T-cell (primary cell): ENCODE measurements at regions of chr14 and their contacts with region 1.

Region 1: GRCh38 chr14:58297762-58298476 is 436 bp upstream of the ARID4A start:
- DNase-seq: peak; percentile 92 to 100 (median 99)
- ATAC-seq: peak; percentile 84 to 86 (median 86)
- H3K4me3 ChIP-seq: peak overlapping the region; percentile 87 to 98
- H3K4me3 Mint-ChIP-seq: no peak overlapping the region
- H3K27ac ChIP-seq: peak overlapping the region; percentile 99
- H3K27ac Mint-ChIP-seq: no peak overlapping the region
- H3K4me1 ChIP-seq: peaks cover 29 to 34% of the 10 kb centered on the region in 2 experiments
- H3K4me1 Mint-ChIP-seq: peaks cover 46 to 64% (median 63%) of the 10 kb centered on the region in 3 donors
- H3K27me3 ChIP-seq: no peaks in the 10 kb centered on the region
- H3K27me3 Mint-ChIP-seq: no peaks in the 10 kb centered on the region

Region 2: GRCh38 chr14:58244556-58245387 is 53.1 kb before region 1 on chr14 and contains the start of gene PSMA3:
- CTCF ChIA-PET with region 1: interaction called in 1 of 2 experiments, 13 read pairs
- POLR2A ChIA-PET with region 1: interaction called, 3 to 31 read pairs
- DNase-seq: peak; percentile 93 to 99 (median 98)
- ATAC-seq: peak; percentile 92 to 95 (median 92)
- H3K4me3 ChIP-seq: peak within 1 kb of the TSS; percentile 83 to 88
- H3K4me3 Mint-ChIP-seq: peak within 1 kb of the TSS; percentile 98 to 99 (median 99)
- H3K27ac ChIP-seq: peak within 1 kb of the TSS; percentile 94
- H3K27ac Mint-ChIP-seq: peak within 1 kb of the TSS; percentile 99
- H3K4me1 ChIP-seq: peaks cover 18% of the 10 kb centered on the region in 2 experiments
- H3K4me1 Mint-ChIP-seq: peaks cover 45 to 51% (median 49%) of the 10 kb centered on the region in 3 donors
- H3K27me3 ChIP-seq: no peaks in the 10 kb centered on the region
- H3K27me3 Mint-ChIP-seq: no peaks in the 10 kb centered on the region
- total RNA-seq, gene PSMA3: 75.5 to 139 (median 99.7) TPM

Region 3: DNA sequence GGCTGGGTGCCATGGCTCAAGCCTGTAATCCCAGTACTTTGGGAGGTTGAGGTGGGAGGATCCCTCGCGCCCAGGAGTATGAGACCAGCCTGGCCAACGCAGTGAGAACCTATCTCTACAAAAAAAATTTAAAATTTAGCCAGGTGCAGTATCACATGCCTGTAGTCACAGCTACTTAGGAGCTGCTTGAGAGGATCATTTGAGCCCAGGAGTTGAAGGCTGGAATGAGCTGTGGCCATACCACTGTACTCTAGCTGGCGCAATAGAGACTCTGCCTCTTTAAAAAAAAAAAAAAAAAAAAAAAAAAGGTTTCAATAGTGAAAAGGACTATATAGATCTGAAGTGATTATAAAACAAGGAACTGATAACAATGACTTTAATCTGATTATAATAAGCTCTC is 39.8 kb before region 1 on chr14:
- CTCF ChIA-PET with region 1: interaction called in 1 of 2 experiments, 4 read pairs
- POLR2A ChIA-PET with region 1: interaction called in 1 of 2 experiments, 12 read pairs
- DNase-seq: no peak
- ATAC-seq: no peak
- H3K4me3 ChIP-seq: no peak overlapping the region
- H3K4me3 Mint-ChIP-seq: no peak overlapping the region
- H3K27ac ChIP-seq: no peak overlapping the region
- H3K27ac Mint-ChIP-seq: no peak overlapping the region
- H3K4me1 ChIP-seq: no peaks in the 10 kb centered on the region
- H3K4me1 Mint-ChIP-seq: peaks cover 5 to 18% (median 16%) of the 10 kb centered on the region in 3 donors
- H3K27me3 ChIP-seq: no peaks in the 10 kb centered on the region
- H3K27me3 Mint-ChIP-seq: no peaks in the 10 kb centered on the region

Region 4: GRCh38 chr14:58275527-58276190 is 22.3 kb before region 1 on chr14:
- CTCF ChIA-PET with region 1: no interaction called
- POLR2A ChIA-PET with region 1: interaction called, 3 to 13 read pairs
- DNase-seq: no peak
- ATAC-seq: peak in 1 of 4 experiments; percentile 55
- H3K4me3 ChIP-seq: no peak overlapping the region
- H3K4me3 Mint-ChIP-seq: peak overlapping the region in 1 of 3 donors; percentile 19
- H3K27ac ChIP-seq: peak overlapping the region; percentile 43
- H3K27ac Mint-ChIP-seq: peak overlapping the region; percentile 77 to 91
- H3K4me1 ChIP-seq: peaks cover 16 to 28% of the 10 kb centered on the region in 2 experiments
- H3K4me1 Mint-ChIP-seq: peaks cover 50 to 58% (median 50%) of the 10 kb centered on the region in 3 donors
- H3K27me3 ChIP-seq: no peaks in the 10 kb centered on the region
- H3K27me3 Mint-ChIP-seq: no peaks in the 10 kb centered on the region

Region 5: GRCh38 chr14:58280954-58281787 is 16.7 kb before region 1 on chr14:
- CTCF ChIA-PET with region 1: interaction called in 1 of 2 experiments, 8 read pairs
- POLR2A ChIA-PET with region 1: interaction called, 7 to 14 read pairs
- DNase-seq: peak in 18 of 35 experiments; percentile 9 to 55 (median 18)
- ATAC-seq: peak; percentile 75 to 84 (median 82)
- H3K4me3 ChIP-seq: no peak overlapping the region
- H3K4me3 Mint-ChIP-seq: peak overlapping the region; percentile 49 to 63 (median 55)
- H3K27ac ChIP-seq: peak overlapping the region; percentile 61
- H3K27ac Mint-ChIP-seq: peak overlapping the region; percentile 89 to 90
- H3K4me1 ChIP-seq: peaks cover 24 to 29% of the 10 kb centered on the region in 2 experiments
- H3K4me1 Mint-ChIP-seq: peaks cover 68 to 78% (median 73%) of the 10 kb centered on the region in 3 donors
- H3K27me3 ChIP-seq: no peaks in the 10 kb centered on the region
- H3K27me3 Mint-ChIP-seq: no peaks in the 10 kb centered on the region

Region 6: GRCh38 chr14:58331111-58331510 is 33.2 kb after region 1 on chr14:
- CTCF ChIA-PET with region 1: interaction called, 4 to 5 read pairs
- POLR2A ChIA-PET with region 1: interaction called, 3 to 32 read pairs
- DNase-seq: peak; percentile 69 to 99 (median 90)
- ATAC-seq: peak; percentile 95 to 97 (median 96)
- H3K4me3 ChIP-seq: no peak overlapping the region
- H3K4me3 Mint-ChIP-seq: peak overlapping the region; percentile 41 to 69 (median 52)
- H3K27ac ChIP-seq: peak overlapping the region; percentile 76
- H3K27ac Mint-ChIP-seq: peak overlapping the region; percentile 89 to 93
- H3K4me1 ChIP-seq: peaks cover 2 to 11% of the 10 kb centered on the region in 2 experiments
- H3K4me1 Mint-ChIP-seq: peaks cover 11 to 35% (median 27%) of the 10 kb centered on the region in 3 donors
- H3K27me3 ChIP-seq: no peaks in the 10 kb centered on the region
- H3K27me3 Mint-ChIP-seq: no peaks in the 10 kb centered on the region

Region 7: DNA sequence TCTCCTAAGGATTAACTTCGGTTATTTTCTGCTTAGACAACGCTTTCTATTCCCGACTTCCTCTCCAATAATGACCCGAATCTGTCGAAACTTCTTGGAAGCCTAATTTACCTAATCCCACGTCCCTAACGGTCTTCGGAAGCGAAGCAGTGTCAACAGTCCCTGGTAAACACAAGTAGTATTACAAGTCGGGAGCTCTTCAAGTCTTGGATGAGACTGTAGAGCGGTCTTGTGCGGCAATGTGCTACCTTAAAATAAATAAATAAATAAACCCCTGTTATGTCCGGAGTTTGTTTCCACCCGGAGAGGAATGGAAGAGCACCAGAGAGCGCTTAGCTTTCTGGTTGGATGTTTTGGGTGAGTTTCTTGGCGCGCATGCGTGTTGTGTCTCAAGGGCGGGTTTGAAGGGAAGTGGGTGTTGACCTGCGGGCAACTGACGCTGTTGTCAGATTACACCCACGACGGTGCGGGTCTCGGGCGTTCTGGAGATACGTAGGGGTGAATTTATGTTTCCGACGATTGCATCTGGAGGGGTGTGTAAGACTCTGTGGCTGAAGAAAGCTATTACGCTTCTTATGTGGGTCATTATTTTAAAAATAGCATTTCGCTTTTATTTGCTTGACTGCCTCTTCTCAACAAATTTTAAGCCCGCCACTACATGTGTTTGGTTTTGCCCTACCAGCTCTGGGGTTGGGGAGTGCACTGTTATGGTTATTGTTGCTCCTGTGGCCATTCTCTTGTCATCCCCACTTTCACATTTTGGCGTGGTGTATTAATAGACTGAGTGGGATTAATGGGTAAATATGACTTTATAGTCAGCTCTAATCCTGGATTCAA is 129.6 kb after region 1 on chr14 and contains the starts of genes KIAA0586 and TIMM9:
- CTCF ChIA-PET with region 1: interaction called in 1 of 2 experiments, 10 read pairs
- POLR2A ChIA-PET with region 1: interaction called in 1 of 2 experiments, 12 read pairs
- DNase-seq: peak; percentile 84 to 98 (median 96)
- ATAC-seq: peak; percentile 93 to 94 (median 94)
- H3K4me3 ChIP-seq: peak within 1 kb of the TSS; percentile 81 to 97
- H3K4me3 Mint-ChIP-seq: peak within 1 kb of the TSS; percentile 80 to 95 (median 93)
- H3K27ac ChIP-seq: peak within 1 kb of the TSS; percentile 94
- H3K27ac Mint-ChIP-seq: peak within 1 kb of the TSS; percentile 97 to 99
- H3K4me1 ChIP-seq: peaks cover 12 to 14% of the 10 kb centered on the region in 2 experiments
- H3K4me1 Mint-ChIP-seq: peaks cover 47 to 54% (median 50%) of the 10 kb centered on the region in 3 donors
- H3K27me3 ChIP-seq: no peaks in the 10 kb centered on the region
- H3K27me3 Mint-ChIP-seq: no peaks in the 10 kb centered on the region
- total RNA-seq, gene KIAA0586: 32.5 to 37.8 (median 33.7) TPM
- total RNA-seq, gene TIMM9: 23.4 to 37.4 (median 29.1) TPM